Right ventricle myocardium inferior (tissue), 1 donor: ENCODE measurements at regions of chr7 and their contacts with region 1.

Region 1: DNA sequence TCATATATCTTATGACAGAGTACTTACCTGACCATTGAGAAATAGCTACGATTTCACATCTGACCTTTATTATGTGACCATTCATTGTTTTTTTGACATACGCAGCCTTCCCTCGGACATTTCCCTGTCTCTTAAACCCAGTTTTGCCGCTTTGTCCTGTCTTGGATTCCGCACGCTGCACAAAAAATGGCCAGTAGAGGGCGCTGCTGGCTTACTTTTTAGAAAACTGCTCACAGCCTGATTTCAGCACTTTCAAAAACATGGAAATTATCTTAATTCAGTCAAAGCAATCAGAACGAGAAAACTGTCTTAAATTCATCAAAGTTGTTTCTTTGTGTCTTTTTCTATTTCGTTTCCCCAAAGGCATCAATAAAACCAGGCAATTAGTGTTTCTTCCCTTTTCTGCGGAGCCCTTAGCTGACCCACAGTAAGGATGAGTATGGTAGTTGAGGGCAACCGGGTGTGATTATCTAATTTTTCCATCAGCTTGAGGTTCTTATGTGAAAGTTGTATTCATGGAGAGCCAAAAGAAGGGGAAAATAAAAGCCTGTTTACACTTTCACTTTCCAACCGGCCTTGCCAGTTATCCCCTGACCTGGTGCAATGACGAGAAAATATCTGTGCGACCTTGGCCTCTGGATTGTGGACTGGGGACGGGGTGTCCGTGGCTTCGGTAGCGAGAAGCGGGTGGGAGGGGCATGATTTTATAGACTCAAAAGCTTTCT is 144.4 kb downstream of the DYNC1I1 start:
- DNase-seq: peak; percentile 81
- ATAC-seq: peak; percentile 72

Region 2: GRCh38 chr7:96075510-96076349 is 159.0 kb after region 1 on chr7:
- intact Hi-C with region 1: loop called (anchors 5 kb)
- DNase-seq: peak; percentile 73
- ATAC-seq: peak; percentile 92

Region 3: GRCh38 chr7:96380111-96380512 is 463.4 kb after region 1 on chr7:
- intact Hi-C with region 1: no loop called
- DNase-seq: no peak
- ATAC-seq: no peak

Region 4: GRCh38 chr7:97064967-97065587 is 1148.3 kb after region 1 on chr7:
- intact Hi-C with region 1: loop called (anchors 10 kb)
- DNase-seq: no peak
- ATAC-seq: peak; percentile 54